Aorta (tissue), 5 donors: ENCODE measurements at regions of chr4 and their contacts with region 1.

Region 1: DNA sequence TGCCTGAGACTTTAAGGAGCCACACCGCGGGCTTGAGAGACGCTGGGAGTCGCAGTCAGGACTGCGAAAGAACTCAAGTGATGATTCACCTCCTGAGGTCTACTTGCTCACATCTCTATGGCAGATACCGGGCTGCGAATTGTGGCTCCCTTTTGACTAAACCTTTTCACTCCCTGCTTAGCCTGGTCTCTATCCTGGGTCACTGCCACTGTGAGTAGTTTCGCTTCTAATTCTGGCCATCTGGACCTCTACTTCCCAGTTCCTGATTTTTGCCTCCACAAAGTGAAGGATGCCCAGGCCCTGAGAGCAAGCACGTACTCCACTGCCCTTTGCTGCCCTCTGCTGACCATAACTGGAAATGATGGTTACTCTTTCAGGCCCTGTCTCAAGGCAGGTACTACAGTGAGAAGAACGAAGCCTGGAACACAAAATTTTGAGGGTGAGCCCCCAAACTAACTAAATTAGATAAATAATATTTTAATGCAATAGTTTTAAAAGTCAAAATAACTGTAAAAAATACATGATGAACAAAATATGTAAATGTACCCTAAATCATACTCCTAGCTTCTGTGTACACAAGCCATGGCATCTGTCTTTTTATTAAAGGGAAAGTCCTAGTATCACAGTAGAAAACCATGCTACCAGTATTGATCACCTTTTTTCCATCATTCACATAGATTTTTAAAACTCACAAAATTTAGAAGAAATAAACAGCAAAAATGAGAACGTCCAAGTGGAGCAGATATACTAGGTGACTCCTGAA is 16.7 kb downstream of the MAD2L1 start:
- DNase-seq: peak; percentile 76 to 81
- ATAC-seq: peak; percentile 93
- H3K4me3 ChIP-seq: peak overlapping the region; percentile 4 to 71
- H3K27ac ChIP-seq: peak overlapping the region; percentile 71 to 99
- H3K4me1 ChIP-seq: peaks cover 0 to 6% of the 10 kb centered on the region in 2 donors
- H3K27me3 ChIP-seq: no peaks in the 10 kb centered on the region

Region 2: DNA sequence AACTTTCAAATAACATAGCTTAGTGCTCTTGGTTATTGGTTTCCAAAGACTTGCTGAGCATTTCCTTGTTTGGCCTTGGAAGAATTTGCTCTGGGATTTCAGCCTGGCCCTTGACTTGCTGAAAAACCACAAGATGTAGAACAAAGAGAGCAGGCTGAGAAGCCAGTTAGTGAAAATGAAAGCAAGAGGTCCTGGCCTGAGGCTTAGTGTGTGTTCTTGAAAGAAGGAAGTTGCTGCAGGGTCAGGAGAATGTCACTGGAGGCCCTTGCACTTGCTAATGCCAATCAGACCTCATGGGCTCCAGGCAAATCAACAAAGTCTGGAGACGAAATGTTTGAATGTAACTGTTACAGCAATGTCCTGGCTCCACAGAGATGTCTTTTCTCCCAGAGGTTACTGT is 1081.9 kb before region 1 on chr4:
- intact Hi-C with region 1: loop called in 1 of 2 experiments (anchors 10 kb)
- DNase-seq: peak in 1 of 2 donors; percentile 78
- ATAC-seq: peak; percentile 89
- H3K4me3 ChIP-seq: no peak overlapping the region
- H3K27ac ChIP-seq: peak overlapping the region; percentile 85 to 97
- H3K4me1 ChIP-seq: peaks cover 11 to 21% of the 10 kb centered on the region in 2 donors
- H3K27me3 ChIP-seq: no peaks in the 10 kb centered on the region

Region 3: GRCh38 chr4:119510395-119511149 is 539.3 kb before region 1 on chr4:
- intact Hi-C with region 1: loop called in 1 of 2 experiments (anchors 5 kb)
- DNase-seq: no peak
- ATAC-seq: peak; percentile 55
- H3K4me3 ChIP-seq: no peak overlapping the region
- H3K27ac ChIP-seq: no peak overlapping the region
- H3K4me1 ChIP-seq: peaks cover 5 to 7% of the 10 kb centered on the region in 2 donors
- H3K27me3 ChIP-seq: no peaks in the 10 kb centered on the region

Region 4: DNA sequence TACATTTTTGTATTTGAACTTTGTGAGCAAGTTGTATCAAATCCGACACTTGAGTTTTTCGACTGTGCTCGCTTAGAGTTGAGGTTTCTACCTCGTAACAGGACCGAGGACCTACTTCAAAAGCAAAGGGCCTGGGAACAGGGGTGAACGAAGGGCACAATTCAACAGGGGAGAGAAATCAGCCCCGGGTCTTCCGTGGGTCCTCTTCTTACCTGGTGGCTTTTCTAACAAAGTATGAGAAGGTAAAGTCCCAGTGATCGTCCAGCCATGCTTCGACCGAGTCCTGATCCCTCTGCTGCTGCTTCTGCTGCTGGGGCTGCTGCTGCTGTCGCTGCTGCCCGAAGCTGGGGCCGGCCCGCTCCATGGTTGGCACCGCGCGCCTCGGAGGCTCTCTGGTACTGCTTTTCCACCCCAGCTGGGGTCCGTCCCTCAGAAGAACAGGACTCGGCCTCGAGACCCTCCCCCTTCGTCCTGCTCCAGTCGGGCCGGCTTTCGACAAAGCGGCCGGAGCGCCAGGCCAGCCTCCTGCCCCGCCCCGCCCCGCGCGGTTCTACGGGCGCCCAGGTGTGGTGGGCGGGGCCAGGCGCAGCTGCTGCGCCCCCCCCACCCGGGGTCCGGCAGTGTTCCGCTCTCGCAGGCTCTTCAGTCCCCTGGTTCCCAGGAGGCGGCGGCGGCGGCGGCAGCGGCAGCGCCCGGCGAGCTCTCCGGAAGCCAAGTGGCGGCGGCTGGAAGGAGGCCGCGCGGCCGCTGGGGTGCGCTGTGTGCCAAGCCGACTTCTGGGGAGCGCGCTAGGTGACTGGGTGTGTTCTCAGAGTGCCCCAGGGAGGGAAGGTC is 421.4 kb before region 1 on chr4 and contains the start of gene PDE5A:
- intact Hi-C with region 1: loop called (anchors 1 to 2 kb)
- DNase-seq: peak; percentile 87 to 94
- ATAC-seq: peak; percentile 89
- H3K4me3 ChIP-seq: peak within 1 kb of the TSS; percentile 63 to 67
- H3K27ac ChIP-seq: peak within 1 kb of the TSS; percentile 89 to 96
- H3K4me1 ChIP-seq: no peaks in the 10 kb centered on the region
- H3K27me3 ChIP-seq: no peaks in the 10 kb centered on the region
- total RNA-seq, gene PDE5A: 196 to 343 TPM

Region 5: GRCh38 chr4:119729835-119730670 is 319.9 kb before region 1 on chr4:
- intact Hi-C with region 1: loop called (anchors 5 kb)
- DNase-seq: peak; percentile 75 to 83
- ATAC-seq: peak; percentile 59
- H3K4me3 ChIP-seq: no peak overlapping the region
- H3K27ac ChIP-seq: peak overlapping the region; percentile 98 to 99
- H3K4me1 ChIP-seq: peaks cover 7 to 19% of the 10 kb centered on the region in 2 donors
- H3K27me3 ChIP-seq: no peaks in the 10 kb centered on the region

Region 6: DNA sequence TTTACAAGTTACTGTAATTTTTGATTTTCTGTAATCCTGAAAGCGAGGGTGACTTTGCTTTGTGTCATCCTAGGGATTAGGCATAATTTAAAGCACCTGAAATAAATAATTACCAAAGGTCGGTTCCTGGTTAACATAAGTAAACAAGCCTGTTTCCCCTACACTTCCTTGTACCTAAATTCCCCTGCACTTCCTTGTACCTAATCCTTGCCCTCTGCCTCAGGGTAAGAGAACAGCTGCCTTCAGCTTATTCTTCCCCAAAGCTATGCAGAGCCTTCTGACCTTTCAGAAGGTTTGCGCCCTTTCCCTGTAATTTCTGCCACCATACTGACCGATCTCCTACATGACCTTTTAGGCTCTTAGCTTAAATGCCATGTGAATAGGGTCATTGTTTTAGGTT is 255.2 kb before region 1 on chr4:
- intact Hi-C with region 1: loop called (anchors 5 kb)
- DNase-seq: no peak
- ATAC-seq: no peak
- H3K4me3 ChIP-seq: no peak overlapping the region
- H3K27ac ChIP-seq: no peak overlapping the region
- H3K4me1 ChIP-seq: no peaks in the 10 kb centered on the region
- H3K27me3 ChIP-seq: no peaks in the 10 kb centered on the region

Region 7: GRCh38 chr4:119861731-119862130 is 188.2 kb before region 1 on chr4:
- intact Hi-C with region 1: loop called in 1 of 2 experiments (anchors 10 kb)
- DNase-seq: no peak
- ATAC-seq: no peak
- H3K4me3 ChIP-seq: no peak overlapping the region
- H3K27ac ChIP-seq: no peak overlapping the region
- H3K4me1 ChIP-seq: no peaks in the 10 kb centered on the region
- H3K27me3 ChIP-seq: no peaks in the 10 kb centered on the region

Region 8: GRCh38 chr4:120406960-120407359 is 357.0 kb after region 1 on chr4:
- intact Hi-C with region 1: no loop called
- DNase-seq: no peak
- ATAC-seq: no peak
- H3K4me3 ChIP-seq: no peak overlapping the region
- H3K27ac ChIP-seq: no peak overlapping the region
- H3K4me1 ChIP-seq: no peaks in the 10 kb centered on the region
- H3K27me3 ChIP-seq: no peaks in the 10 kb centered on the region